HEK293 (cell line): ENCODE measurements at regions of chr9 and their contacts with region 1.

Region 1: GRCh38 chr9:4762108-4762885 is 21.3 kb upstream of the AK3 start:
- H3K4me3 ChIP-seq: peak overlapping the region; percentile 22
- H3K27ac ChIP-seq: no peak overlapping the region
- H3K4me1 ChIP-seq: no peaks in the 10 kb centered on the region
- CTCF ChIP-seq: peak; percentile 78

Region 2: GRCh38 chr9:4604678-4605095 is 157.6 kb before region 1 on chr9:
- CTCF ChIA-PET with region 1: interaction called, 17 read pairs
- POLR2A ChIA-PET with region 1: no interaction called
- H3K4me3 ChIP-seq: no peak overlapping the region
- H3K27ac ChIP-seq: no peak overlapping the region
- H3K4me1 ChIP-seq: no peaks in the 10 kb centered on the region
- CTCF ChIP-seq: no peak

Region 3: GRCh38 chr9:4750023-4750673 is 12.1 kb before region 1 on chr9:
- CTCF ChIA-PET with region 1: interaction called, 25 read pairs
- POLR2A ChIA-PET with region 1: interaction called, 4 read pairs
- H3K4me3 ChIP-seq: no peak overlapping the region
- H3K27ac ChIP-seq: no peak overlapping the region
- H3K4me1 ChIP-seq: no peaks in the 10 kb centered on the region
- CTCF ChIP-seq: no peak

Region 4: GRCh38 chr9:4921449-4921848 is 159.2 kb after region 1 on chr9:
- CTCF ChIA-PET with region 1: interaction called, 10 read pairs
- POLR2A ChIA-PET with region 1: no interaction called
- H3K4me3 ChIP-seq: no peak overlapping the region
- H3K27ac ChIP-seq: no peak overlapping the region
- H3K4me1 ChIP-seq: no peaks in the 10 kb centered on the region
- CTCF ChIP-seq: no peak

Region 5: GRCh38 chr9:5042641-5043277 is 280.5 kb after region 1 on chr9:
- CTCF ChIA-PET with region 1: no interaction called
- POLR2A ChIA-PET with region 1: no interaction called
- H3K4me3 ChIP-seq: no peak overlapping the region
- H3K27ac ChIP-seq: no peak overlapping the region
- H3K4me1 ChIP-seq: no peaks in the 10 kb centered on the region
- CTCF ChIP-seq: no peak

Region 6: DNA sequence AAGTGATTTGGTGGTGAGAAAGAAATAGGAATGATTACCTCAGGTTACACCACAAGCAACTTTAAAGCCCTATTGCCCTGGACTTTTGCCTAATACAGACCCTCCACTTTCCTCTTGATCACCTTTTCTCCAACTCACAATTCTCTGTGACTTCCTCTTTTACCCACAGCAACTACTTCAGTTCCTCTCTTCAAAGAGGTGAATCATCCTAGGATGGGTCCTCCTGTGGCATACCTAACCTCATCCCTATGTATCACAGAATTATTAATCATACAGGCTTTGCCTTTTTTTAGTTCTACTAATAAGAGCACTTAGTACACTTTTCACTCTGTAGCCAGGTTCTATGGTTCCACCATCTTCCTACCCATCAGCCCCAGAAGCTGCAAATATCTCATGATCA is 442.8 kb after region 1 on chr9:
- CTCF ChIA-PET with region 1: no interaction called
- POLR2A ChIA-PET with region 1: no interaction called
- H3K4me3 ChIP-seq: no peak overlapping the region
- H3K27ac ChIP-seq: no peak overlapping the region
- H3K4me1 ChIP-seq: no peaks in the 10 kb centered on the region
- CTCF ChIP-seq: no peak

Region 7: GRCh38 chr9:5326893-5327548 is 564.7 kb after region 1 on chr9:
- CTCF ChIA-PET with region 1: no interaction called
- POLR2A ChIA-PET with region 1: interaction called, 10 read pairs
- H3K4me3 ChIP-seq: no peak overlapping the region
- H3K27ac ChIP-seq: no peak overlapping the region
- H3K4me1 ChIP-seq: no peaks in the 10 kb centered on the region
- CTCF ChIP-seq: no peak